ENCODE measurements at regions of chr9 and their contacts with region 1.

Region 1: DNA sequence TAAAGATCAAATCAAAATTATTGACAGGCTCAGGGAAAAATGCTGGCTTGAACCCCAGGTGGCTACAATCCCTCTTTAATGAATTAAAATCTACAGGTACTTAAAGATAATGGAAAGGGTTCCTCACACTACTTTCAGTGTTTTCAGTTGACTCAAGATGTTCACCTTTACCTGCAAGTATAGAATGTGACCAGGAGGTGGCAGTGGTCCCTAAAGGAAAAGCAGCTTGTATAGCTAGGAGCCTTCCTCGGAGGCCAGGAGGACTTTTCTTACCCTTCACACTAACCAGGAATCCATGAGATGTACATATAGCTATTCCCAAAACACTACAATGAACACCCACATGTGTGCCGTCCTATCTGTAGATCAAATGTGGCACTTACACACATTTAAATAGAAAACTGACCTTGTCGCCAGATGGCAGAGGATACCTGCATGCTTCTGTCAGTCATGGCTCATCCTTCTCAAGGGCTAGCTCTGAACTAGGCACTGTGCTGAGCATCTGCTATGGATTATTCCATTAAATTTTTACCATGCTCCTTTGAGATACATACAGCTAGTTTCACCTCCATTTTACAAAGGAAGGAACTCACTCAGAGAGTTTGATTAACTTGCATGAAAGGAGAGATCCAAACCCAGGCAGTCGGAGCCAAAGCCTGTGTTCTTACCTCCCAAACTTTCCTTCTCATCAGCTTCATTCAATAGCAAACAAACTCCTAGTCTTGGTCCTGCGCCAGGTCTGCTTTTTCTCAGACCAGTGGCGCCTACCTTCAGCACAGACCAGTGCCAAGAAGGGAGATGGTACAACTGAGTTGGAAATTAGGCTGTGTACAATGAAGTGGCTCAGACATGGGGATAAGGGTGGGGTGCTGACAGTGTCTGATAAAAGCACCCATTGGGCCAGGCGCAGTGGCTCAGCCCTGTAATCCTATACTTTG is 24.5 kb downstream of the C9orf152 start:
- DNase-seq: peak; percentile 67
- H3K4me3 Mint-ChIP-seq: no peak overlapping the region
- H3K27ac Mint-ChIP-seq: no peak overlapping the region
- H3K4me1 Mint-ChIP-seq: no peaks in the 10 kb centered on the region
- H3K27me3 Mint-ChIP-seq: no peaks in the 10 kb centered on the region

Region 2: GRCh38 chr9:110217656-110218099 is 34.2 kb after region 1 on chr9:
- CTCF ChIA-PET with region 1: interaction called, 31 read pairs
- POLR2A ChIA-PET with region 1: no interaction called
- intact Hi-C with region 1: loop called (anchors 2 kb)
- DNase-seq: no peak
- H3K4me3 Mint-ChIP-seq: no peak overlapping the region
- H3K27ac Mint-ChIP-seq: no peak overlapping the region
- H3K4me1 Mint-ChIP-seq: no peaks in the 10 kb centered on the region
- H3K27me3 Mint-ChIP-seq: peaks cover 2% of the 10 kb centered on the region

Region 3: GRCh38 chr9:111298731-111299598 is 1115.5 kb after region 1 on chr9:
- CTCF ChIA-PET with region 1: interaction called, 5 read pairs
- POLR2A ChIA-PET with region 1: no interaction called
- intact Hi-C with region 1: loop called (anchors 1 kb)
- DNase-seq: no peak
- H3K4me3 Mint-ChIP-seq: no peak overlapping the region
- H3K27ac Mint-ChIP-seq: no peak overlapping the region
- H3K4me1 Mint-ChIP-seq: no peaks in the 10 kb centered on the region
- H3K27me3 Mint-ChIP-seq: peaks cover 3% of the 10 kb centered on the region